ENCODE measurements at regions of chr1 and their contacts with region 1.

Region 1: DNA sequence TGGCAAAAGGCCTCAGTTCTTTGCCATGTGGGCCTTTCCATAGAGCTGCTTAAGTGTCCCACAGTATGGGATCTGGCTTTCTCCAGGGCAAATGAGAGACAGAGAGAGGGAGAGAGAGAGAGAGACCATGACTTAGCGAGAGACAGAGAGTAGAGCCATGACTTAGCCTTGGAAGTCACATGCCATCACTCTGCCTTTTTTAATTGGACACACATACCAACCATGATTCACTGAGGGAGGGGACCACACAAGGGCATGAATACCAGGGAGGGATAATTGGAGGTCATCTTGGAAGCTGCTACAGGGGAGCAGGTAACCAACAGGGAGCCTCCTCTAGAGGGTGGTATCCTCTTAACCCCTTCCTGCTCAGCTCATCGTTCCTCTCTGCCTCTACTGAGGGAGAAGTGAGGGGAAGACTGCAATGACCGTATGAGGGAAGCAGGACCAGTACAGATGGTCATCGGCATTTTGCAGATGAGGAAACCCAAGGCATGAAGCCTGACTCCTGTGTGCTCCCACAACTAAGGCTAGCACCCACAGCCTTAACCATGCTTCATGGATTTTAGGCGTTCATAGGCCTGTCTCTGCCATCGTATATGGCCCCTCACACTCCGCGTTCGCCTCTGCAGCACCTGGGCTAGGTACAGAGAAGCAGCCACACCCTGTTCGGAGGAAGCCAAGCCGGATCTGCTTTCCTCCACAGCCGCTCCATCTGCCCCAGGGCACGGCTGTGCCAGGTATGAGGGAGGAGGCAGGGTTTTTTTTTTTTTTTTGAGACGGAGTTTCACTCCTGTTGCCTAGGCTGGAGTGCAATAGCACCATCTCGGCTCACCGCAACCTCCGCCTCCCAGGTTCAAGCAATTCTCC is 38.6 kb downstream of the MEF2D start:
- DNase-seq: no peak
- ATAC-seq: no peak
- H3K4me3 ChIP-seq: no peak overlapping the region
- H3K27ac ChIP-seq: peak overlapping the region; percentile 15
- H3K4me1 ChIP-seq: peaks cover 16% of the 10 kb centered on the region
- H3K27me3 ChIP-seq: no peaks in the 10 kb centered on the region

Region 2: DNA sequence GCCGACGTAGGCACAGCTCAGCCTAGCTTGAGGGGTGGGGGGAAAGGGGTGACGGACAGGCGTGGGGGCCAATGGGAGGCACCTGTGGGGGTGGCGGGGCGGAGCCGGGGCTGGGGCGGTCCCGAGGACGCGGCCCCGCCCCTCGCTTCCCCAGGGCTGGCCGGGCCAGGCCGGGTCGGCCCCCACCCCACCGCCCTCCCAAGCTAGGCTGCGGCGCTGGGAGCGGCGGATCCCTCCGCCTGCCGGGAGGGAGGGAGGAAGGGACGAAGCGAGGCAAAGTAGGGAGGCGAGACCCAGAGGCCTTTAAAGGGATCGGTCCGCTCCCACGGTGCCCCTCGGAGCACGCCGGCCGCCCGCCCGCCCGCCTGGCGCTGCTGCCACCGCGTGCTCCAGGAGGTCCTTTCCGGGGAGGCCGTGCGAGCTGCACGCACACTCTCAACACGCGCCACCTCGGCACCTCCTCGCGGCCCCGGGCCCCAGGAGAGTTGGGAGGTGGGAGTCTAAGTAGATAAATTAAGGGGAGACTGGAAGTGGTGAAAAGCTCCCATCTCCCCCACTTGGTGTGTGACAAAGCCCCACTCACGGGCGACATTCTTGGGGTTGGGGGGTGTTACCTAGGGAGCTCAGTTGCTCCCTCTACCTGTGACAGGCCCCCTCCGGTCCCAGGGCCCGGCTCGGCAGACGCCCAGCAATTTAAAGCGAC is 38.9 kb after region 1 on chr1:
- intact Hi-C with region 1: loop called in 3 of 4 experiments (anchors 2 to 5 kb)
- DNase-seq: peak; percentile 95 to 98 (median 98)
- ATAC-seq: peak; percentile 87 to 91
- H3K4me3 ChIP-seq: peak overlapping the region; percentile 82
- H3K27ac ChIP-seq: peak overlapping the region; percentile 99
- H3K4me1 ChIP-seq: peaks cover 40% of the 10 kb centered on the region
- H3K27me3 ChIP-seq: no peaks in the 10 kb centered on the region

Measured in right cardiac atrium (tissue), 5 donors.